Caco-2 (cell line): ENCODE measurements at regions of chr14 and their contacts with region 1.

Region 1: DNA sequence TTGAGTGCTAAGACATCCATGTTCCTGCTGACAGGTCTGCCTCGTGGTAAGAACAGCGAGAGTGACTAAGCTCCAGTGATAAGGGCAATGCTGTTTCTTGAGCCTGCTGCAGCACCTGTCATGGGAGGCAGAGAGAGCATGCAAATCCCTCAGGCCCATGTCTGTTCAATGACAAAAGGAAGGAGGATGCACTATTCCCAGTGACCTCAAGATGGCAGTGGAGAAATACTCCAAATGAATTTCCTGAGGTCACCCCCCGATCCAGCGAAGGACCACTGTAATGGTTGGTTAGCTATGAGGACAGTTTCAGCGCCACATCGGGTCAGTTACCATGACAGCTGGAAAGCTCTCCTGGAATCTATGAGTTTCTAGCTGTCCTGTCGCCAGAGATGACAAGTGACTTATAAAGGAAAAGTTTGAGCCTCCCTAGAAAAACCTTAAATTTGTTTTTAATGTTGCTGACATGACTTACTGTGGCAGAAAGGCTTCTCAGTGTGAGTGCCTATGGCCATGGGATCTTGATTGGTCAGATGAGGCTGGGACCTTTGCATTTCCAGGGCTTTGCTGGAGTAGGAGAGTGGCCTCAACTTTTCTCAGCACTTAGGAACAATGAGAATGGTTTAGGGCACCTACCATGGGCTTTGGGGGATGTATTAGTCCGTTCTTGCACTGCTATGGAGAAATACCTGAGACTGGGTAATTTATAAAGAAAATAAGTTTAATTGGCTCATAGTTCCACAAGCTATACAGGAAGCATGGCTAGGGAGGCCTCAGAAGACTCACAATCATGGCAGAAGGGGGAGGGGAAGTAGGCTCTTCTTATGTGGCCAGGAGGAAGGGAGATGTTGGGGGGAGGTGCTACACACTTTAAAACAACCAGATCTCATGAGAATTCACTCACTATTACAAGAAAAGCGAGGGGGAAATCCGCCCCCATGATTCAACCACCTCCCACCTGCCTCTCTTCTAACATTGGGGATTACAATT is 88.0 kb upstream of the TMEM260 start:
- DNase-seq: peak; percentile 70 to 71
- H3K4me3 ChIP-seq: no peak overlapping the region
- H3K4me3 Mint-ChIP-seq: no peak overlapping the region
- H3K27ac Mint-ChIP-seq: no peak overlapping the region
- H3K4me1 ChIP-seq: no peaks in the 10 kb centered on the region
- H3K4me1 Mint-ChIP-seq: no peaks in the 10 kb centered on the region
- H3K27me3 ChIP-seq: no peaks in the 10 kb centered on the region
- H3K27me3 Mint-ChIP-seq: peaks cover 9% of the 10 kb centered on the region
- CTCF ChIP-seq: peak; percentile 71 to 78

Region 2: GRCh38 chr14:56419750-56420149 is 71.8 kb before region 1 on chr14:
- CTCF ChIA-PET with region 1: no interaction called
- POLR2A ChIA-PET with region 1: no interaction called
- intact Hi-C with region 1: no loop called
- DNase-seq: no peak
- H3K4me3 ChIP-seq: no peak overlapping the region
- H3K4me3 Mint-ChIP-seq: no peak overlapping the region
- H3K27ac Mint-ChIP-seq: no peak overlapping the region
- H3K4me1 ChIP-seq: no peaks in the 10 kb centered on the region
- H3K4me1 Mint-ChIP-seq: no peaks in the 10 kb centered on the region
- H3K27me3 ChIP-seq: no peaks in the 10 kb centered on the region
- H3K27me3 Mint-ChIP-seq: no peaks in the 10 kb centered on the region
- CTCF ChIP-seq: no peak

Region 3: GRCh38 chr14:56555921-56556570 is 64.5 kb after region 1 on chr14:
- CTCF ChIA-PET with region 1: interaction called, 28 read pairs
- POLR2A ChIA-PET with region 1: no interaction called
- intact Hi-C with region 1: loop called (anchors 1 kb)
- DNase-seq: peak in 1 of 2 experiments; percentile 52
- H3K4me3 ChIP-seq: no peak overlapping the region
- H3K4me3 Mint-ChIP-seq: no peak overlapping the region
- H3K27ac Mint-ChIP-seq: no peak overlapping the region
- H3K4me1 ChIP-seq: 0 out of 2 replicates have a peak, but pooled peaks cover 4% of the 10 kb centered on the region
- H3K4me1 Mint-ChIP-seq: no peaks in the 10 kb centered on the region
- H3K27me3 ChIP-seq: no peaks in the 10 kb centered on the region
- H3K27me3 Mint-ChIP-seq: peaks cover 2% of the 10 kb centered on the region
- CTCF ChIP-seq: peak; percentile 63 to 83

Region 4: GRCh38 chr14:57066887-57067513 is 575.4 kb after region 1 on chr14:
- CTCF ChIA-PET with region 1: no interaction called
- POLR2A ChIA-PET with region 1: no interaction called
- intact Hi-C with region 1: loop called (anchors 1 kb)
- DNase-seq: peak; percentile 54 to 72
- H3K4me3 ChIP-seq: no peak overlapping the region
- H3K4me3 Mint-ChIP-seq: no peak overlapping the region
- H3K27ac Mint-ChIP-seq: no peak overlapping the region
- H3K4me1 ChIP-seq: no peaks in the 10 kb centered on the region
- H3K4me1 Mint-ChIP-seq: peaks cover 7% of the 10 kb centered on the region
- H3K27me3 ChIP-seq: no peaks in the 10 kb centered on the region
- H3K27me3 Mint-ChIP-seq: no peaks in the 10 kb centered on the region
- CTCF ChIP-seq: peak; percentile 69 to 84

Region 5: DNA sequence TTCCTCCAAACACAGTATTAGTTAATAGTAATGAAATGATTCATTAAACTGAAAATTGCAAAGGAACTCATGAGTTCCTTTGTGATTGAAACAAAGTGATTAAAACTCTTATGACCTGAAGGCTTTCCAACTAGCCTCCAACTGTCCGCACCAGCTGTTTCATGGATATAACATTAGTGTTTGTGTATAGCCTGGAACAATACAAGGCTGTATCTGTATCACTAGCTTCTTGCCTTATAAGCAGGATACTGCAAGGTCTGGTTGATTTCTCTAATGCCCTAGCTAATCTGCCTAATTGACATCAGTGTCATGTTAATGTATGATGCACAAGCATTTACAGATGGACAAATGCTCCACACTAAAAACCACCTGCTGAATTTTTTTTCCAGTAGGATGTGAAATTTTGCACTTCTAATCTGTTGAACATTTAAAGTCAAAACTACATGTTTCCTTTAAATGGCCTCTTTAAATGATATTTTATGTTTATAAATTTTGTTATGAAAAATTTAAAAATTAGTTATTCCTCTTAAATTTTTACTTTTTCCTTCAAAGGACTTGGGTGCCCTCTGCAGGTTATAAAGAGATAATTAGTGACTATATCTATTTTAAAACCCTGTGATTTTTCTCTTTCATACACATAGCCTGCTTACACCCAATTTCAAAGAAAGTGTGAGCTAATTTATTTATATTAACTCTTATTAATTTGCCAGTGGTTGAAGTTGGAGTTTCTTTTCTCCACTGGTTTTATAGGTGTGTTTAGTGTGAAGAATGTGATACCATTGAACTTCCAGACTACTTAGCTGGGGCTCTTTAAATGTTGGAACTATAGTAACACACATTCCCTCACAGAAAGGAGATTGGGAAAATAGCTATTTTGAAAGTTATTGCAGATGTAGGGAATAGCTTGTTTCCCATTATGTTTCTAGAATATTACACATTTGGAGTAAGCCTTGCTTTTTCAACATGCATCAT is 802.6 kb after region 1 on chr14:
- CTCF ChIA-PET with region 1: no interaction called
- POLR2A ChIA-PET with region 1: no interaction called
- intact Hi-C with region 1: loop called (anchors 1 kb)
- DNase-seq: no peak
- H3K4me3 ChIP-seq: no peak overlapping the region
- H3K4me3 Mint-ChIP-seq: no peak overlapping the region
- H3K27ac Mint-ChIP-seq: no peak overlapping the region
- H3K4me1 ChIP-seq: peaks cover 29% of the 10 kb centered on the region
- H3K4me1 Mint-ChIP-seq: no peaks in the 10 kb centered on the region
- H3K27me3 ChIP-seq: no peaks in the 10 kb centered on the region
- H3K27me3 Mint-ChIP-seq: no peaks in the 10 kb centered on the region
- CTCF ChIP-seq: peak in 1 of 2 experiments; percentile 25